ENCODE measurements at regions of chr3 and their contacts with region 1.

Region 1: DNA sequence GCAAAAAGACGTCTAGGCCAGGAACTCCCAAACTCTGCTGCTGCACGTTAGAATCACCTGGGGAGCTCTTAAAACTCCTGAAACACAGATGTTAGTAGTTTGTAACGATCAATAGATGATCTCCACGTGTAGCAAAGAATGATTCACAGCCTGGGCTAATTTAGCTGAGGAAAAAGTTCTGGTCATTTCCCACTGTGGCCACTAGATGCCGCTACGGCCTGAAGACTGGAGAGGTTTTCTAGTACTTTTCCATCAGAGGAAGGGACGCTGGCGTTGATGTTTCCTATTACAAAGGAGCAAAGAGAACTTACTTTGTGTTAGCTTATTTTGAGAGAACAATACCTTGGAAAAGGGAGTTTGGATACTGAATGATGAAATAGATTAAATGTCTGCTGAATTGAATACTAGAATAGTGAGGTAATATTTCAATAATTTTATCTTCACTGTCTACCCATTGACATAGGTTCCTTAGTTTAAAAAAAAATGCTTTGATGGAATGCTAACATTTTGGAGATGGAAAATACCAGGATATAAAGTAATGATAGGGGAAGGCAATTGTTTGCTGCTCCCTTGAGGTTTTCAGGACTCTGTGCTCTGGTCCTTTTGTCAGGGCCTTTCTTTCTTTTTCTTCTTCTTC is 159.1 kb downstream of the P3H2 start:
- DNase-seq: peak; percentile 75
- CTCF ChIP-seq: peak; percentile 85

Region 2: DNA sequence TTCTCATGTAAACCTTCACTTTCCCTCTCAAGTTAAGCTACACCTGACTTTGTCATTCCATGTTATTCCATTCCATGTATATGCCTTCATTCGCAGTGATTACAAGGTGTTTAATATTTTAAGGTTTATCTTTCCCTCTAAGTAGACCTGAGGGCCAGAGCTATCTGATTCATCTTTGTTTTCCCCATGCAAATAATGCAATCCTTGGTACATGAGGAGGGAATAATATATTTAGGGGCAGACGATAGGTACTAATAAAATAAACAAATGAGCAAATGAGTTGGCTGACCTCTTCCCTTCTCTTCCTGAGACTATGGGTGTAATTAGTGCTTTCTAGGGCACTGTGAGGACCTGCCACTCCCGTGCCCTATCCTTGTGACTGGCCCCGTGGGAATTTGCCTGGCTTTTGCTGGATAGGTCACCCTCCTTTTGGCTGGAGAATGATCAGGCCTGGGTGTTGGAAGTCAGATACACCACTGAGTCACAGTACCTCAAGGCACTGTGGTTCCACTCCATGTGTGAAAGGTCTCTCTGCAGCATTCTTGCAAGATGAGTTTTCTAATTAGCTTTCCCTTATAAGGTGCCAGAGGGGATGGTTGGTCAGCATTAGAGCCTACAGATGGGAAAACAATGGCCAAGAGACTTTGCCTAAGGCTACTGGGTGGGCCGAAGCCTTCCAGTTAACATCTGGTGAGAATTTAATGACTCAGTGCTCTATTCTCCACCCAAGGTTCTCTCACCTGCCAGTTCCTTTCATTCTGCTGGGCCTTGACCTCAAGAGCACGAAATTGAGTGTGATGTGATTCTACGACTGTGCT is 24.1 kb before region 1 on chr3:
- CTCF ChIA-PET with region 1: interaction called, 11 read pairs
- POLR2A ChIA-PET with region 1: no interaction called
- DNase-seq: no peak
- CTCF ChIP-seq: no peak

Region 3: DNA sequence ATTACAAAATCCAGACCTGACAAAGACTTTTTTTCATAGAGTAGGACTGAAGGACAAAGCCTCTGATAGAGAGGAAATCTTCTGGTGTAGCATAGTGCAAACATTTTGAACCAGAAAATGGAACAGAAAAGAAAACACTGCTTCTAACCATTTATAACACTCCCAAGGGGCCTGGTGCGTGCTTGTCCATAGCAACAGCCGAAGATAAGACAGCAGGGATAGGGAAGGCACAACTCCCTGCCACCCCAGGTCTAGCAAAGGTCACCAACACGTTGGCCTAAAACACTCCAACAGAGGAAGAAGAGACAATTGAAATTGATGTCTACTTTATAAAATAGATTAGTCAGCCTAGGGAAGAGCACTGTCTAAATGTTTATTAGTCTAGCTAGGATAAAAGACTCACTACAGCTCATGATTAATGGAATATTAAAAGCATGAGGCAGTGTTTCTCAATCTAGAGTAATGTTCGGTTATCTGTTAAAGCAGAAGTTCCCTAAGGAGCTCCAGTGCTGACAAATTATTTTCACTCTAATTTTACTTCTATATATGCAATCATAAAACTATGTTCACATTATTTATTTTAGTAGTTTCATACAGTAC is 13.8 kb after region 1 on chr3:
- CTCF ChIA-PET with region 1: interaction called, 30 read pairs
- POLR2A ChIA-PET with region 1: no interaction called
- DNase-seq: no peak
- CTCF ChIP-seq: no peak

Region 4: GRCh38 chr3:190205739-190206138 is 244.1 kb after region 1 on chr3:
- CTCF ChIA-PET with region 1: interaction called, 39 read pairs
- POLR2A ChIA-PET with region 1: no interaction called
- DNase-seq: peak; percentile 46
- CTCF ChIP-seq: no peak

Region 5: DNA sequence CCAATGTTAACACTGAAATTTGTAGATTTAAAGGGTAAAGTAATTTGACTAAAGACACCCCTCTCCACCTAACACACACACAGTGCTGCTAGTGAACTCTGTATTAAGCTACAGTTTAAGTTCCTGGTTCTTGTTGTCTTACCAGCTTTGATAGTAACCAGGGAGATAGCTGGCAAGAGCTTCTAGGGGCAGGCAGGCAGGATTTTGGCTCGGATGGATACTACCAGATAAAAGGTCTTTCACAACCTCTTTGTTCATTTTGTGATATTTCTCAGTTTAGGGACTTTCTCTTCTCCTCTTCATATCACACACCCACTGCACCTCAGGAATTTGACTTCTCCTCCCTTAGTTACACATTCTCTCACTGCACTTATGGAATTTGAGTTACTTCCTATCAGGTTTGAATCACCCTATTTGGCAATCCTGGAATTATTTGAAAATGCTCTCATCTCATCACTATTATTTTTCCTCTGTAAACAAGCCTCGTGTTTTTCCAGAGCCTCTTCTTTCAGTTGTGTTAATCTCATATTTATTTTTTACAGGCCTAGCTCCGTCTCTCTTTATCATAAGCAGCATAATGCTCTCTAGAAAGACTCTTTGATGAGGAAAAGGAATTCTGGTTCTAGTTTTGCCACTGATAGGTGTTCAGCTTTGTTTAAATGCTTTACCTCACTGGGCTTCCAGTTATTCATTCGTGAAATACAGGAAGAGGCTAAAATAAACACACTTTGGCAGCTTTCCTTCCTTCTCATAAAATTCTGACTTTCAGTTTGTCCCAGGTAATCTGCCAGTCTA is 383.6 kb after region 1 on chr3:
- CTCF ChIA-PET with region 1: no interaction called
- POLR2A ChIA-PET with region 1: no interaction called
- DNase-seq: no peak
- CTCF ChIP-seq: no peak

Region 6: DNA sequence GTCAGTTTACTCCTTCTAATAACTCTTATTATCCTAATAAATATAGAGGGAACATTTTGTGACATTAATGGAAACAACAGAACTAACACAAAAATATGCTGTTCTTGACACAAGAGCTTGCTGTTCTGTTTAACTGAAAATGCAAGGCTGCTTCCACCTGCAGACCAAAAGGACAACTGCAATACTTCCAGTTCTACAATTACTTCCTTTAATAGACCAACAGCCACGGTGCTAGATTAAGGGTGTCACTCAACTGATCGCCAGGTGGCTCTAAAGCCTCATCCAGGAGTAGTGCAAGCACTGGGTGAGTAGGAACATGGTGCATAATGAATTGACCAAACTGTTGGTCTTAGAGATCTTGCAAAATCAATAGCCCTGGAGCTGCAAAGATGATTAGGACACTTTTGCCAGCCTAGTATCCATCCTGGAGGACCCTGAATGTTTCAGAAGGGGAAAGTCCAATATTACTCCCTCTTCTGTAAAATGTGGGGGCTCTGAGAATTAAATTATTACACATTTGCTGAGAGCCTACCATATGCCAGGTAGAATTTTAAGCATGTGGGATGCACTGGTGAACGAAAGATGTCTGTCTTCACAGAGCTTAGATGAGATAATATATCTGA is 422.7 kb after region 1 on chr3:
- CTCF ChIA-PET with region 1: interaction called, 15 read pairs
- POLR2A ChIA-PET with region 1: no interaction called
- DNase-seq: peak; percentile 24
- CTCF ChIP-seq: peak; percentile 60

Region 7: DNA sequence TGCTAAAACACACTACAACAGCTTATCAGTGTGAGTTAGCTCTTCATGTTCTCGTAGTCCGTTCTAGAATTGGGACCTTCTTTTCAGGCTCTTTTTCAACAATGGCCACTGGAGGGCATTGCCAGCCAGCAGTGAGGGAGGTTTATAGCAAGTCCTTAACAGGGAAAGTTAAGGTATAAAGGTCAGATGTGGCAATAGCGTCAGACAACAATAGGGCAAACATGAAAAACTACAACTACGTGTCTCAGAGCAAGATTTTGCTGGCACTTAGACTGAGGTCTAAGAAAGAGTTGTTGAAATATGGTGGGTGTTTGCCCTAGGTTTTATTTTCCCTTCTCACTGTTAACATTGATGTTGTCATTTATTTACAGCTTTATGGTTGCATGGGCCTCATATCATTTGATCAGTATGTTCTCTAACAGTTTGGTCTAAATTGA is 739.5 kb after region 1 on chr3:
- CTCF ChIA-PET with region 1: interaction called, 41 read pairs
- POLR2A ChIA-PET with region 1: no interaction called
- DNase-seq: peak; percentile 4
- CTCF ChIP-seq: peak; percentile 22

Measured in GM10248 (cell line).